H1 (cell line): ENCODE measurements at regions of chr10 and their contacts with region 1.

Region 1: GRCh38 chr10:122298598-122299301 is 27.7 kb downstream of the BTBD16 start:
- DNase-seq: peak; percentile 70 to 82
- H3K4me3 ChIP-seq: no peak overlapping the region
- H3K27ac ChIP-seq: no peak overlapping the region
- H3K4me1 ChIP-seq: peaks cover 0 to 3% (median 2%) of the 10 kb centered on the region in 4 experiments; a peak in 6 of 7 replicates
- H3K27me3 ChIP-seq: no peaks in the 10 kb centered on the region
- CTCF ChIP-seq: peak; percentile 81 to 90 (median 89)
- EP300 ChIP-seq: no peak
- POLR2A ChIP-seq: no peak
- RAD21 ChIP-seq: peak; percentile 96 to 98

Region 2: DNA sequence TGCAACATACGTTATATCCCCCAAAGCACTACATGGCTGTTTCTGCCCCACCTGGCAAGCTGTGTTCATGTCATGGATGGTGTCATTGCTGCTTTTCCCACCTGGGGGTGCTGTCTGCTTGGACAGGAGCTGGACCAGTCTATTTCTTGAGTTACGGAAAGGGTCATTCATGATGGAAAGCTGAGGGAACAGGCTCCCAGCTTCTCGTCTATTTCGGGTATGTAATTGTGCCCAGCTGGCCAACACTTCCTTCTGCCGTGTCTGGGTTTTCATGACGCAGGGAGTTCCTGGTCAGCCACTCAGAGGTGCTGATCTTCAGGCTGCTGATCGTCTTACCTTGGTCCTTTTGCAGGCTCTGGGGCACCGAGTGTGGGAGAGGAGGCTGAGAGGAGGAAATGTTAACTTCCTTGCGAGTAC is 19.0 kb before region 1 on chr10:
- CTCF ChIA-PET with region 1: interaction called, 22 read pairs
- POLR2A ChIA-PET with region 1: interaction called, 3 read pairs
- DNase-seq: peak in 1 of 2 experiments; percentile 86
- H3K4me3 ChIP-seq: no peak overlapping the region
- H3K27ac ChIP-seq: no peak overlapping the region
- H3K4me1 ChIP-seq: peaks cover 0 to 6% (median 2%) of the 10 kb centered on the region in 4 experiments; a peak in 2 of 7 replicates
- H3K27me3 ChIP-seq: no peaks in the 10 kb centered on the region
- CTCF ChIP-seq: peak; percentile 87 to 93 (median 89)
- EP300 ChIP-seq: no peak
- POLR2A ChIP-seq: no peak
- RAD21 ChIP-seq: peak; percentile 93 to 97

Region 3: DNA sequence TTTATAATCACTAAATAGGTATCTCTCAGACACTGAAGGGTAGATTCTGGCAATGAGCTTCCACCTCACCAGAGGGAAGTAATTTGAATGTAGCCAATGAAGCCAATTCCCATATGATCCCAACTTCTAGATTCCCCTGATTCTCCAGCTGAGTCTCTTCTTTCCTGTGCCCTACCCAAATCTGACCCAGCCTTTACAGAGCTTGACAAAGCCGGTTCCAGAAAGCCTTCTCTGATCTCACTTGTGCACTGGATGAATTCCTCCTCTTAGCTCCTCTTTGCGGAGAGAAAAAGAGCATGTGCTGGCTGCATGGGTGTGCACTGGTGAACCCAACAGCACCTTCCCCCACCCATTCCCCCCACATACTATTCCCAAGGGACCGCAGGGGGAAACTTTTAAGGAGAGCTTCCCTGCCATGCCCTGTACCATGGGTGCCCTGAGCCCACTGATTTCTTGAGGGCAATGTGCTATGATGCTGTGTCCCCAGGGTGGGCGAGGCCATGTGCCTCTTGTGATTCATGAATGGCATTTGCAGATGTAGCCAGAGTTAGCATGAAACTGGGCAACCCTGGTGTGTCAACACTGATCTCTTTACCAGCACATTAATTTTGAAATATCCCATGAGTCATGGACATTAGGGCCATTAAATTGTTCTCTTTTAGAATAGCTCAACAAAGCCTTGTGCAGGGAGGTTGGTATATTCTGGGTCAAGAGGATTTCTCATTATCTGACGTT is 25.4 kb after region 1 on chr10:
- CTCF ChIA-PET with region 1: interaction called, 10 read pairs
- POLR2A ChIA-PET with region 1: no interaction called
- DNase-seq: no peak
- H3K4me3 ChIP-seq: no peak overlapping the region
- H3K27ac ChIP-seq: no peak overlapping the region
- H3K4me1 ChIP-seq: no peaks in the 10 kb centered on the region
- H3K27me3 ChIP-seq: no peaks in the 10 kb centered on the region
- CTCF ChIP-seq: no peak
- EP300 ChIP-seq: no peak
- POLR2A ChIP-seq: no peak
- RAD21 ChIP-seq: no peak

Region 4: DNA sequence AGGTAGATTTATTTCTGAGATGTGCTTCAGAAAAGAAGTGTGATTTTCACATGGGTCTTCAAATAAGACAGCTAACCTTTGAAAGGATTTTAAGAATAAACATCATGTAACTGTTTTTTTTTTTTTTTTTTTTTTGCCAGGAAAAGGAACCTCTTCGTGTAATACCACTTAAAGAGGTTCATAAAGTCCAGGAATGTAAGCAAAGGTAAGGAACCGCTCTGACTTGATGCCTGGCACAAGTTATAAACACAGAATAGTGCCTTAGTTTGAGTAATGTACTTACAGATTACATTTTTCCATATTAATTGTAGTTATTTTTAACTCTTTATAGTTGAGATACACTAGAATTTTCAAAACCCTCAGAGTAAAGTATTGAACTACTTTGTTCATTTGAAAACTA is 125.3 kb after region 1 on chr10:
- CTCF ChIA-PET with region 1: interaction called, 12 read pairs
- POLR2A ChIA-PET with region 1: no interaction called
- DNase-seq: no peak
- H3K4me3 ChIP-seq: no peak overlapping the region
- H3K27ac ChIP-seq: no peak overlapping the region
- H3K4me1 ChIP-seq: 0 out of 7 replicates have a peak, but pooled peaks cover 0 to 3% (median 0%) of the 10 kb centered on the region in 4 experiments
- H3K27me3 ChIP-seq: no peaks in the 10 kb centered on the region
- CTCF ChIP-seq: no peak
- EP300 ChIP-seq: no peak
- POLR2A ChIP-seq: no peak
- RAD21 ChIP-seq: no peak

Region 5: GRCh38 chr10:122557516-122557915 is 258.8 kb after region 1 on chr10:
- CTCF ChIA-PET with region 1: interaction called, 13 read pairs
- POLR2A ChIA-PET with region 1: no interaction called
- DNase-seq: peak in 1 of 2 experiments; percentile 45
- H3K4me3 ChIP-seq: no peak overlapping the region
- H3K27ac ChIP-seq: no peak overlapping the region
- H3K4me1 ChIP-seq: peaks cover 0 to 4% (median 1%) of the 10 kb centered on the region in 4 experiments; a peak in 3 of 7 replicates
- H3K27me3 ChIP-seq: no peaks in the 10 kb centered on the region
- CTCF ChIP-seq: no peak
- EP300 ChIP-seq: no peak
- POLR2A ChIP-seq: no peak
- RAD21 ChIP-seq: no peak